Activated CD8-positive, alpha-beta T cell treated with anti-CD3 and anti-CD28 coated beads for 36 hours (primary cell): ENCODE measurements at regions of chr6 and their contacts with region 1.

Region 1: GRCh38 chr6:25992413-25993037 is 29.9 kb downstream of the TRIM38 start:
- DNase-seq: peak; percentile 96
- ATAC-seq: peak; percentile 96
- H3K4me3 Mint-ChIP-seq: peak overlapping the region; percentile 91
- H3K27ac Mint-ChIP-seq: peak overlapping the region; percentile 97
- H3K4me1 Mint-ChIP-seq: peaks cover 25% of the 10 kb centered on the region
- H3K27me3 Mint-ChIP-seq: no peaks in the 10 kb centered on the region
- CTCF ChIP-seq: peak; percentile 98

Region 2: GRCh38 chr6:25882051-25882496 is 110.5 kb before region 1 on chr6:
- CTCF ChIA-PET with region 1: interaction called, 12 read pairs
- POLR2A ChIA-PET with region 1: no interaction called
- intact Hi-C with region 1: no loop called
- DNase-seq: peak; percentile 53
- ATAC-seq: peak; percentile 92
- H3K4me3 Mint-ChIP-seq: peak overlapping the region; percentile 70
- H3K27ac Mint-ChIP-seq: peak overlapping the region; percentile 23
- H3K4me1 Mint-ChIP-seq: peaks cover 3% of the 10 kb centered on the region
- H3K27me3 Mint-ChIP-seq: peaks cover 3% of the 10 kb centered on the region
- CTCF ChIP-seq: peak; percentile 45

Region 3: GRCh38 chr6:25962149-25963127 is 30.1 kb before region 1 on chr6 and contains the start of gene TRIM38:
- CTCF ChIA-PET with region 1: interaction called, 20 read pairs
- POLR2A ChIA-PET with region 1: interaction called, 12 read pairs
- intact Hi-C with region 1: no loop called
- DNase-seq: peak; percentile 88
- ATAC-seq: peak; percentile 87
- H3K4me3 Mint-ChIP-seq: peak within 1 kb of the TSS; percentile 83
- H3K27ac Mint-ChIP-seq: peak within 1 kb of the TSS; percentile 94
- H3K4me1 Mint-ChIP-seq: peaks cover 73% of the 10 kb centered on the region
- H3K27me3 Mint-ChIP-seq: no peaks in the 10 kb centered on the region
- CTCF ChIP-seq: no peak
- total RNA-seq, gene TRIM38: 8.0 to 8.3 TPM

Region 4: DNA sequence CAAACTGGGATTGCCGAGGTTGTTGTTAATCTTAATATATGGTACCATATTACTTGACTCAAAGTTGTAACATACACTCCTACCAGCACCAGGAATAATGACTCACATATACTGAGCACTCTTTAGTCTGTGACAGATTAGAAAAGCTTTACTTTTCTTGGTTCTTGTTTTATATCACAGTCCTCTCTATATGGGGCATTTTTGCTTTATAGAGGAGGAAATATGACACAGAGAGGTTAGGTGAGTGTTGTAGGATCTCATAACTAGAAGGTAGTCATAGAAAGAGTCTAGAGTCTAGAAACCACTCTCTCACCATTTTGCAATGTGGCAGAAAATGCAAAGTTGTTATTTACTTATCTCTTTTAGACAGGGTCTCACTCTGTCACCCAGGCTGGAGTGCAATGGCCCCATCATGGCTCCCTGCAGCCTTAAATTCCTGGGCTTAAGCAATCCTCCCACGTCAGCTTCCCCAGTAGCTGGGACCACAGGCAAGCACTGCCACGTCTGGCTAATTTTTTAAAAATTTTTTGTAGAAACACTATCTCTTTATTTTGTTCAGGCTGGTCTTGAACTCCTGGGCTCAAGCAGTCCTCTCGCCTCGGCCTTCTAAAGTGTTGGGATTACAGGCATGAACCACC is 16.5 kb before region 1 on chr6:
- CTCF ChIA-PET with region 1: interaction called, 29 read pairs
- POLR2A ChIA-PET with region 1: interaction called, 14 read pairs
- intact Hi-C with region 1: no loop called
- DNase-seq: no peak
- ATAC-seq: peak; percentile 91
- H3K4me3 Mint-ChIP-seq: no peak overlapping the region
- H3K27ac Mint-ChIP-seq: peak overlapping the region; percentile 3
- H3K4me1 Mint-ChIP-seq: peaks cover 35% of the 10 kb centered on the region
- H3K27me3 Mint-ChIP-seq: no peaks in the 10 kb centered on the region
- CTCF ChIP-seq: no peak

Region 5: GRCh38 chr6:26003102-26003694 is 10.7 kb after region 1 on chr6:
- CTCF ChIA-PET with region 1: interaction called, 118 read pairs
- POLR2A ChIA-PET with region 1: interaction called, 3 read pairs
- intact Hi-C with region 1: no loop called
- DNase-seq: peak; percentile 63
- ATAC-seq: peak; percentile 49
- H3K4me3 Mint-ChIP-seq: no peak overlapping the region
- H3K27ac Mint-ChIP-seq: no peak overlapping the region
- H3K4me1 Mint-ChIP-seq: no peaks in the 10 kb centered on the region
- H3K27me3 Mint-ChIP-seq: no peaks in the 10 kb centered on the region
- CTCF ChIP-seq: peak; percentile 89

Region 6: GRCh38 chr6:26017632-26017966 is 25.1 kb after region 1 on chr6:
- CTCF ChIA-PET with region 1: interaction called, 48 read pairs
- POLR2A ChIA-PET with region 1: interaction called, 95 read pairs
- intact Hi-C with region 1: no loop called
- DNase-seq: peak; percentile 97
- ATAC-seq: peak; percentile 50
- H3K4me3 Mint-ChIP-seq: peak overlapping the region; percentile 73
- H3K27ac Mint-ChIP-seq: peak overlapping the region; percentile 90
- H3K4me1 Mint-ChIP-seq: peaks cover 33% of the 10 kb centered on the region
- H3K27me3 Mint-ChIP-seq: no peaks in the 10 kb centered on the region
- CTCF ChIP-seq: no peak

Region 7: DNA sequence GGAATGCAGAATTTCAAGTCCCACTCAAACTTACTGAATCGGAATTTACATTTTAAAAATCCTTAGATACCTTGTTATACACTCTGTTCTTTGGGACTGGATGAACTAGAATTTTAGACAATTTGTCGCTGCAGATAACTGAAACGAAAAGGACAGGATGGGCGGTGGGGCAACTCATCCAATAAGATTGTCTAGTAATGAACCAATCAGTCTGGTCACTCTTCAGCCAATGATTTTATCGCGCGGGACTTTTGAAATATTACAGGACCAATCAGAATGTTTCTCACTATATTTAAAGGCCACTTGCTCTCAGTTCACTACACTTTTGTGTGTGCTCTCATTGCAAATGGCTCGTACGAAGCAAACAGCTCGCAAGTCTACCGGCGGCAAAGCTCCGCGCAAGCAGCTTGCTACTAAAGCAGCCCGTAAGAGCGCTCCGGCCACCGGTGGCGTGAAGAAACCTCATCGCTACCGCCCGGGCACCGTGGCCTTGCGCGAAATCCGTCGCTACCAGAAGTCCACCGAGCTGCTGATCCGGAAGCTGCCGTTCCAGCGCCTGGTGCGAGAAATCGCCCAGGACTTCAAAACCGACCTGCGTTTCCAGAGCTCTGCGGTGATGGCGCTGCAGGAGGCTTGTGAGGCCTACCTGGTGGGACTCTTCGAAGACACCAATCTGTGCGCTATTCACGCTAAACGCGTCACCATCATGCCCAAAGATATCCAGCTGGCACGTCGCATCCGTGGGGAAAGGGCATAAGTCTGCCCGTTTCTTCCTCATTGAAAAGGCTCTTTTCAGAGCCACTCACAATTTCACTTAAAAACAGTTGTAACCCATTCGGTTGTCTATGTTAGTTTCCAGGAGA is 52.8 kb after region 1 on chr6:
- CTCF ChIA-PET with region 1: no interaction called
- POLR2A ChIA-PET with region 1: interaction called, 12 read pairs
- intact Hi-C with region 1: no loop called
- DNase-seq: peak; percentile 85
- ATAC-seq: peak; percentile 63
- H3K4me3 Mint-ChIP-seq: peak overlapping the region; percentile 76
- H3K27ac Mint-ChIP-seq: peak overlapping the region; percentile 96
- H3K4me1 Mint-ChIP-seq: peaks cover 10% of the 10 kb centered on the region
- H3K27me3 Mint-ChIP-seq: no peaks in the 10 kb centered on the region
- CTCF ChIP-seq: no peak

Region 8: DNA sequence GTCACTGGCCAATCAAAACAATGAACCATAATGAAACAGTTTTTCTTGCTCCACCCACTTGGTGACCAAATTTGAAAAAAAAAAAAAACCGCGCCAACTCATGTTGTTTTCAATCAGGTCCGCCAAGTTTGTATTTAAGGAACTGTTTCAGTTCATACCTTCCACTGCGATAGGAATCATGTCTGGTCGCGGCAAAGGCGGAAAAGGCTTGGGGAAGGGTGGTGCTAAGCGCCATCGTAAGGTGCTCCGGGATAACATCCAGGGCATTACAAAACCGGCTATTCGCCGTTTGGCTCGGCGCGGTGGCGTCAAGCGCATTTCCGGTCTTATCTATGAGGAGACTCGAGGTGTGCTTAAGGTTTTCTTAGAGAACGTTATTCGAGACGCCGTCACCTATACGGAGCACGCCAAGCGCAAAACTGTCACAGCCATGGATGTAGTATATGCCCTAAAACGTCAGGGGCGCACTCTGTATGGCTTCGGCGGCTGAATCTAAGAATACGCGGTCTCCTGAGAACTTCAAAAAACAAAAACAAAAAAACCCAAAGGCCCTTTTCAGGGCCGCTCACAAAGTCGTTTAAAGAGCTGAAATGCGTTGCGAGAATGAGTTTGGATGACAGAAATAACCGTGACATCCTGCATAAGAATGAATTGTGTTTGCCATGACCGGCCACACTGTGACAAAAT is 111.4 kb after region 1 on chr6:
- CTCF ChIA-PET with region 1: no interaction called
- POLR2A ChIA-PET with region 1: no interaction called
- intact Hi-C with region 1: no loop called
- DNase-seq: peak; percentile 90
- ATAC-seq: peak; percentile 87
- H3K4me3 Mint-ChIP-seq: peak overlapping the region; percentile 85
- H3K27ac Mint-ChIP-seq: peak overlapping the region; percentile 98
- H3K4me1 Mint-ChIP-seq: peaks cover 15% of the 10 kb centered on the region
- H3K27me3 Mint-ChIP-seq: peaks cover 2% of the 10 kb centered on the region
- CTCF ChIP-seq: peak; percentile 46

Region 9: GRCh38 chr6:26156076-26156849 is 163.7 kb after region 1 on chr6:
- CTCF ChIA-PET with region 1: no interaction called
- POLR2A ChIA-PET with region 1: no interaction called
- intact Hi-C with region 1: no loop called
- DNase-seq: peak; percentile 87
- ATAC-seq: peak; percentile 41
- H3K4me3 Mint-ChIP-seq: peak overlapping the region; percentile 88
- H3K27ac Mint-ChIP-seq: peak overlapping the region; percentile 93
- H3K4me1 Mint-ChIP-seq: peaks cover 36% of the 10 kb centered on the region
- H3K27me3 Mint-ChIP-seq: peaks cover 14% of the 10 kb centered on the region
- CTCF ChIP-seq: no peak